GM10248 (cell line): ENCODE measurements at regions of chr7 and their contacts with region 1.

Region 1: DNA sequence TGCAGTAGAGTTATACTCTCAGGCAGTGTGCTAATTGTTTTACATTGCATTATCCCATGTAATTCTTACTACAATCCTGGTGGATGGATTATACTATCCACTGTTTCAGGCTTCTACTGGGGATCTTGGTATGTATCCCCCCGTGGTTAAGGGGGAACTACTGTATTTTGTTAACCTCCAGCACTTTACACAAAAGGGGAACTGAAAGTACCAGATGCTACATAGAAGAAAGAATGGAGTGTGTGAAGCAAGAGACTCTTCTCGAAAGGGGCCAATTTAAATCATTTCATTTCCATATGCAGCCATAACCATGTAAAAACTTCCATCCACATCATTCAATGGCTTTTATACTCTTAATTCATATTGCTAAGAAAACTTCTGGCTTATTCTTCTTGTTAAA is 69.4 kb downstream of the C1GALT1 start:
- DNase-seq: peak; percentile 29
- CTCF ChIP-seq: no peak

Region 2: GRCh38 chr7:7235347-7235746 is 16.4 kb before region 1 on chr7:
- CTCF ChIA-PET with region 1: interaction called, 12 read pairs
- POLR2A ChIA-PET with region 1: no interaction called
- DNase-seq: no peak
- CTCF ChIP-seq: no peak